ENCODE measurements at regions of chr17 and their contacts with region 1.

Region 1: GRCh38 chr17:3865176-3865575 is 19.1 kb upstream of the NCBP3 start:
- DNase-seq: no peak
- H3K4me3 ChIP-seq: no peak overlapping the region
- H3K27ac ChIP-seq: no peak overlapping the region
- H3K4me1 ChIP-seq: no peaks in the 10 kb centered on the region
- H3K27me3 ChIP-seq: no peaks in the 10 kb centered on the region
- CTCF ChIP-seq: no peak
- EP300 ChIP-seq: no peak
- POLR2A ChIP-seq: no peak
- RAD21 ChIP-seq: no peak

Region 2: DNA sequence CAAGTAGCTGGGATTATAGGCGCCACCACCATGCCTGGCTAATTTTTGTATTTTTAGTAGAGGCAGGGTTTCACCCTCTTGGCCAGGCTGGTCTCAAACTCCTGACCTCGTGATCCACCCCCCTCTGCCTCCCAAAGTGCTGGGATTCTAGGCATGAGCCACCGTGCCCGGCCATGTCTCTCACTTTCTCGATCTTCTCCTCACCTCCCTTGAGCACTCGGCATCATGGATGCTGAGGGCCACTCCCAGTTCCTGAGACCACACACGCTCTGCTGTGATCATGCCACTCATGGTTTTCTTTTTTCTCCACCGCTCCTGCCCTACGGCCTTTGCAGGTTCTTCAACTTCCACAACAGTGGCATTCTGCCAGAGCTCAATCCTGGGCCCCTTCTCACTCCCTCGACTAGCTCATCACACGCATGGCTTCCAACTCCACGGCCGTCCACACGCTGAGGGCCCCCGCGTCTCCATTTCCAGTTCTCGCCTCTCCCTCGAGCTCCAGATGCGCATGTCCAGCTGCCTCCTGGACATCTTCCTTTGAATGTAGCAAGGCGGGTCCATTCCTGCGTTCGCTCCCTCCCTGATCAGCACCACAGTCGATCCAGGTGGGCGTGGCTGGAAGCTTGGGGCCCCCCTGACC is 13.6 kb before region 1 on chr17:
- CTCF ChIA-PET with region 1: interaction called, 39 read pairs
- POLR2A ChIA-PET with region 1: interaction called, 5 read pairs
- DNase-seq: no peak
- H3K4me3 ChIP-seq: no peak overlapping the region
- H3K27ac ChIP-seq: no peak overlapping the region
- H3K4me1 ChIP-seq: 0 out of 7 replicates have a peak, but pooled peaks cover 0 to under 1% (median 0%) of the 10 kb centered on the region in 4 experiments
- H3K27me3 ChIP-seq: no peaks in the 10 kb centered on the region; a peak in 1 of 7 replicates
- CTCF ChIP-seq: no peak
- EP300 ChIP-seq: no peak
- POLR2A ChIP-seq: no peak
- RAD21 ChIP-seq: no peak

Region 3: DNA sequence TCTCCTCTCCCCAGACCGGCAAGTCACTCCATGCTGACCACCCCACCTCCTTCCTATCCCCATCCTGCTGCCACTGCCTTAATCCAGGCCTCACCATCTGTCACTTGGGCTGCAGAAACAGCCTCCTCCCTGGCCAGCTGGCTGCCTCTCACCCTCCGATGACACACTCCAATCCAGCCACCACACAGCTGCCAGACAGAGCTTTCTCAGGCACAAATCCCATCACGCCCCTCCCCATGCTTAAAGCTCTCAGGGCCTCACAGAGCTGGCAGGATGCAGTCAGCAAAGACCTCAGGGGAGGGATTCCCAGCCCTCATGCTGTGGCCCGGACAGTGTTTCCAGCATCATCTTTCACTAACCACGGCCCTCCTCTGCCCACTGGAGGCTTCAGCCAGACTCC is 14.0 kb after region 1 on chr17:
- CTCF ChIA-PET with region 1: interaction called, 33 read pairs
- POLR2A ChIA-PET with region 1: interaction called, 5 read pairs
- DNase-seq: no peak
- H3K4me3 ChIP-seq: no peak overlapping the region
- H3K27ac ChIP-seq: no peak overlapping the region
- H3K4me1 ChIP-seq: no peaks in the 10 kb centered on the region
- H3K27me3 ChIP-seq: no peaks in the 10 kb centered on the region
- CTCF ChIP-seq: no peak
- EP300 ChIP-seq: no peak
- POLR2A ChIP-seq: no peak
- RAD21 ChIP-seq: no peak

Region 4: GRCh38 chr17:3885970-3886369 is 20.8 kb after region 1 on chr17:
- CTCF ChIA-PET with region 1: interaction called, 33 read pairs
- POLR2A ChIA-PET with region 1: interaction called, 5 read pairs
- DNase-seq: no peak
- H3K4me3 ChIP-seq: no peak overlapping the region
- H3K27ac ChIP-seq: no peak overlapping the region
- H3K4me1 ChIP-seq: peaks cover 0 to 18% (median 10%) of the 10 kb centered on the region in 4 experiments; a peak in 6 of 7 replicates
- H3K27me3 ChIP-seq: no peaks in the 10 kb centered on the region
- CTCF ChIP-seq: no peak
- EP300 ChIP-seq: no peak
- POLR2A ChIP-seq: no peak
- RAD21 ChIP-seq: no peak

Region 5: GRCh38 chr17:3986270-3986938 is 121.2 kb after region 1 on chr17:
- CTCF ChIA-PET with region 1: no interaction called
- POLR2A ChIA-PET with region 1: no interaction called
- DNase-seq: no peak
- H3K4me3 ChIP-seq: no peak overlapping the region
- H3K27ac ChIP-seq: no peak overlapping the region
- H3K4me1 ChIP-seq: peaks cover 4 to 15% (median 7%) of the 10 kb centered on the region in 4 experiments
- H3K27me3 ChIP-seq: no peaks in the 10 kb centered on the region
- CTCF ChIP-seq: no peak
- EP300 ChIP-seq: no peak
- POLR2A ChIP-seq: no peak
- RAD21 ChIP-seq: no peak

Measured in H1 (cell line).